HepG2 (cell line): ENCODE measurements at regions of chr3 and their contacts with region 1.

Region 1: GRCh38 chr3:101685870-101686412 is 577 bp downstream of the RPL24 start:
- DNase-seq: peak; percentile 11
- ATAC-seq: peak; percentile 16
- H3K4me3 ChIP-seq: peak overlapping the region; percentile 79 to 91 (median 91)
- H3K27ac ChIP-seq: peak overlapping the region; percentile 85
- H3K4me1 ChIP-seq: peaks cover 50% of the 10 kb centered on the region
- H3K27me3 ChIP-seq: peaks cover 0 to 4% of the 10 kb centered on the region in 2 experiments; a peak in 1 of 5 replicates
- CTCF ChIP-seq: no peak
- EP300 ChIP-seq: no peak
- POLR2A ChIP-seq: no peak
- RAD21 ChIP-seq: no peak

Region 2: DNA sequence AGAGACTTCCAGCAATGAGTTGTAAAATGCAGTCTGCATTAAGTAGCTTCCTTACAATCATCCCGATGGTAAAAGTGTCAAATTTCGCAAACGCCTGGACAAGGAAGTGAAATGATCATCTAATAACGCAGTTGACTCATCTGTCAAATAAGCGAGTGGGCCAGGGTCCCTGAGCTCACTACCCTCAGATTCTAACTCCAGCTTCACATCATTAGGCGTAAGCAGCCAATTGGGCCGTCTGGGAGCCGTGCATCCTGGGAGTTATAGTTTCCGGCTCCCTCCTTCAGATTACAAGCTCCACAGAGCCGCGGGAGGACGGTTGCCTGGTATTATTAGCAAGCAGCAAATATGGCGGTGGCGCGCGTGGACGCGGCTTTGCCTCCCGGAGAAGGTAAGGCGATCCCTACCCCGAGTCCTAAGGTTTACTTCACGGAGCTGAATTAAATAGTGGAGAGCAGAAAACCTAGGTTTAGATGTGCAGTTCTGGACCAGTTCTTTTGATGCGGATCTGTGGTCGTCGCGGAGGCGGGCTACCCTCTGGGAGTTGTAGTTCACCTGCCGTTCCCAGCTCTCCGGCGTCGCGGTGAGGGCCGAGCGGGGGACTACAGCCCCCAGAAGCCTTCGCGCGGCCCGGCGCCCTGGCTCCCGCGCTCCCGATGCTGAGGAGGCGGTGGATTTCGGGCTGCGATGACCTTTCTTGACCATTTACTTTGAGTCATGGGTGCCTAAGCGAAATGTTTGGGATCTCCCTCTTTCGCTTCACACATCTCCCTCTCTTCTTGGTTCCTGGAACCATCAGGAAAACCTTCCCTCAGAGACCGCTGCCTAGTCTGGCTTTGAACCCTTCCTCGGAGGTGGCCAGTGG is 38.6 kb after region 1 on chr3 and contains the start of gene CEP97:
- CTCF ChIA-PET with region 1: no interaction called
- POLR2A ChIA-PET with region 1: interaction called, 15 read pairs
- in situ Hi-C with region 1: no loop called
- intact Hi-C with region 1: loop called (anchors 2 kb)
- DNase-seq: peak; percentile 87
- ATAC-seq: peak; percentile 99
- H3K4me3 ChIP-seq: peak within 1 kb of the TSS; percentile 81 to 86 (median 82)
- H3K27ac ChIP-seq: peak within 1 kb of the TSS; percentile 18
- H3K4me1 ChIP-seq: peaks cover 36% of the 10 kb centered on the region
- H3K27me3 ChIP-seq: no peaks in the 10 kb centered on the region; a peak in 1 of 5 replicates
- CTCF ChIP-seq: no peak
- EP300 ChIP-seq: no peak
- POLR2A ChIP-seq: peak; percentile 24 to 41; a peak in 1 of 4 replicates
- RAD21 ChIP-seq: no peak
- total RNA-seq, gene CEP97: 6.5 and 10.2 TPM in 2 replicates

Region 3: DNA sequence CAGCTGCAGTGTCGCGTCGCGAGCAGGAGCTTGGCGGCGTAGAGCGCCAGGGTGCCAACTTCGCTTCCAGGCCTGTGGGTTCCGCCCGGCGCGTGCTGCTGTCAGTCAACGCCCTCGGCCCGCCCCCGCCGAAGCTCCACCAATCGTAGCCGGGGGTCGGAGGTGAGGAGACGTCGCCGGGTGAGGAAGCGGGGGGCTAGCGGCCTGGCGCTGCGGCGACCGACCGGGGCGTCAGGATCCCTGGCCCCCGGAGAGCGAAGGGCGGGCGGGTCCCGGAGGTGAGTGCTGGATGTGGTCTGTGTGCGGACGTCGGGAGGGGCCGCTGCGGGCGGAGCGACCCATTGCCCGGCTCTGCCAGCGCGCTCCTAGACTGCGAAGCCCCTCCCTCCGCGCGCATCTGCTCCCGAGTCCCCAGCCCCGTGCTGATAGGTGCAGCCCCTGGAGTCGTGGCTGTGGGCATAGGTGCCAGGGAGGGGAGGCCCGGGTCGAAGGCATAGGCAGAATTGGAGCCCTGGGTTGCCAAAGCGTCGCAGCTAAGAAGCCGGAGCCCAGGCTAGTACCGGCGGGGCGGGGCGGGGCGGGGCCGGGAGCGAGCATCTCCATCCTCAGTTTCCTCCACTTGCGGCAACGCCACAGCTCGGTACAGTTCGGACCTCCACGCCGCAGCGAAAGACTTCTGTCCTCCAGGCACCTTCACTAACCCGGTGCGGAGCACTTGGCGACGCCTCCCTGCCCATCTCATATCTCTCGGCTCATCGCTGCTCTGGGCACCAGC is 93.3 kb after region 1 on chr3 and contains the start of gene NXPE3:
- CTCF ChIA-PET with region 1: no interaction called
- POLR2A ChIA-PET with region 1: no interaction called
- in situ Hi-C with region 1: no loop called
- intact Hi-C with region 1: loop called (anchors 5 kb)
- DNase-seq: peak; percentile 65
- ATAC-seq: peak; percentile 97
- H3K4me3 ChIP-seq: peak within 1 kb of the TSS; percentile 68 to 89 (median 72)
- H3K27ac ChIP-seq: no peak within 1 kb of the TSS
- H3K4me1 ChIP-seq: peaks cover 25% of the 10 kb centered on the region
- H3K27me3 ChIP-seq: no peaks in the 10 kb centered on the region; a peak in 1 of 5 replicates
- CTCF ChIP-seq: peak; percentile 11; the same call in 1 of the 2 replicates
- EP300 ChIP-seq: no peak
- POLR2A ChIP-seq: peak in 1 of 2 experiments; percentile 54; a peak in 1 of 4 replicates
- RAD21 ChIP-seq: no peak
- total RNA-seq, gene NXPE3: 4.7 and 5.3 TPM in 2 replicates

Region 4: DNA sequence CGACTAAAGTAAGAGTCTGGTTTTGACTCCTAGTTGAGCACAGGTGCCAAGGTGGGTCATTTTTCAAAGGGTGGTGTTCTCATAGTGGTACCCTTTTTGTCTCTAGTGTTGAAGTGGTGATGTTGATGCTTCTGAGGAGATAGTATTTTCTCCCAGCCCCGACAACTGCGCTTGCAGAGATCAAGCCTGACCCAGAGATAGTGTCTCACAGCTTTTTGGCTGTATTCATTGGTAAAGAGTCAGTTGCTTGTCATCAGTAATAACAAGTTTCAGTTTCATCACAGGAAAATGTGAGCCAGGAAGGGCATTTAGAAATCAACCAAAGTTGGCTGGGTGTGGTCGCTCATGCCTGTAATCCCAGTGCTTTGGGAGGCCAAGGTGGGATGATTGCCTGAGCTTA is 302.6 kb after region 1 on chr3:
- CTCF ChIA-PET with region 1: no interaction called
- POLR2A ChIA-PET with region 1: no interaction called
- in situ Hi-C with region 1: no loop called
- intact Hi-C with region 1: no loop called
- DNase-seq: no peak
- ATAC-seq: no peak
- H3K4me3 ChIP-seq: no peak overlapping the region
- H3K27ac ChIP-seq: no peak overlapping the region
- H3K4me1 ChIP-seq: no peaks in the 10 kb centered on the region
- H3K27me3 ChIP-seq: no peaks in the 10 kb centered on the region
- CTCF ChIP-seq: no peak
- EP300 ChIP-seq: no peak
- POLR2A ChIP-seq: no peak
- RAD21 ChIP-seq: no peak